Activated naive CD4-positive, alpha-beta T cell treated with anti-CD3 and anti-CD28 coated beads for 36 hours (primary cell): ENCODE measurements at regions of chr12 and their contacts with region 1.

Region 1: DNA sequence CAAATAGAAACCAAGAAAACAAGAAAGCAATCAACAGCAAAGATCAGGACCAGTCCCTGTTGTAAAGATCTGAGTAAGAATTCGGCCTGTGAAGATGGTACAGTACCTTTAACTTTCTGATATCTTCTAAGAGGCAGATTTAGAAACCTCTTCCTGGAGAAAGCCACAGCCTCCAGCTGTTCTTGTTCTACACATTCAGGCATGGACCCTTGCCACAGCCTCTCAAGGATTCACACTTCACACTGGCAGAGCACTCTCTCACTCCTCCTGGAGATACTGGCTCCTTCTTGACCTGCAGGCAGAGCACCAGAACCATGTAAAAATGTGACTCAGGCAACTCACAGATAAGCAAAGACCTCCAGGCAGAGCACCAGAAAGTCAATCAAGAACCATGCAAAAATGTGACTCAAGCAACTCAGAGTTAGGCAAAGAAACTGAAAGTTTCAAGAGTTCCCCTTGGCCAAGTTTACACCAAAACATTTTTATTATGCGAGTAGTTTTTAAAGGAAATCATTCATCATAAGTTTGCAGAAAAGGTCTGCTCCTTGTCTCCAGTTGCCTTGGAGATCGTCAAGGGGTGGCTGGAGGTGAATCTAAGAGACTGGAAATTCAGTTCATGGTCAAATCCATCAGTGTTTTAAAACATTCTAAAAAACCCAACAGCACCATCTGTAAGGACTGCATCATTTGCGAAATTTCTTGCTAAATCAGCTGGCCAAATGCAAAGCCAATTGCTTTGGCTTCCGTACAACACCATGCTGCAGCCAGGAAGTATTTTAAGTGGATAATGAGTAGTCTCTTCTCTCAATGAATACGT is 119.3 kb upstream of the MDM1 start:
- DNase-seq: peak; percentile 71
- H3K4me3 Mint-ChIP-seq: peak overlapping the region; percentile 45
- H3K27ac Mint-ChIP-seq: peak overlapping the region; percentile 96
- H3K4me1 Mint-ChIP-seq: peaks cover 91% of the 10 kb centered on the region
- H3K27me3 Mint-ChIP-seq: no peaks in the 10 kb centered on the region

Region 2: GRCh38 chr12:68290126-68290525 is 161.3 kb before region 1 on chr12:
- CTCF ChIA-PET with region 1: no interaction called
- intact Hi-C with region 1: loop called (anchors 1 kb)
- DNase-seq: peak; percentile 65
- H3K4me3 Mint-ChIP-seq: no peak overlapping the region
- H3K27ac Mint-ChIP-seq: no peak overlapping the region
- H3K4me1 Mint-ChIP-seq: peaks cover 41% of the 10 kb centered on the region
- H3K27me3 Mint-ChIP-seq: peaks cover 12% of the 10 kb centered on the region

Region 3: GRCh38 chr12:68381476-68382219 is 69.8 kb before region 1 on chr12:
- CTCF ChIA-PET with region 1: no interaction called
- intact Hi-C with region 1: no loop called
- DNase-seq: no peak
- H3K4me3 Mint-ChIP-seq: no peak overlapping the region
- H3K27ac Mint-ChIP-seq: no peak overlapping the region
- H3K4me1 Mint-ChIP-seq: peaks cover 15% of the 10 kb centered on the region
- H3K27me3 Mint-ChIP-seq: peaks cover 3% of the 10 kb centered on the region

Region 4: DNA sequence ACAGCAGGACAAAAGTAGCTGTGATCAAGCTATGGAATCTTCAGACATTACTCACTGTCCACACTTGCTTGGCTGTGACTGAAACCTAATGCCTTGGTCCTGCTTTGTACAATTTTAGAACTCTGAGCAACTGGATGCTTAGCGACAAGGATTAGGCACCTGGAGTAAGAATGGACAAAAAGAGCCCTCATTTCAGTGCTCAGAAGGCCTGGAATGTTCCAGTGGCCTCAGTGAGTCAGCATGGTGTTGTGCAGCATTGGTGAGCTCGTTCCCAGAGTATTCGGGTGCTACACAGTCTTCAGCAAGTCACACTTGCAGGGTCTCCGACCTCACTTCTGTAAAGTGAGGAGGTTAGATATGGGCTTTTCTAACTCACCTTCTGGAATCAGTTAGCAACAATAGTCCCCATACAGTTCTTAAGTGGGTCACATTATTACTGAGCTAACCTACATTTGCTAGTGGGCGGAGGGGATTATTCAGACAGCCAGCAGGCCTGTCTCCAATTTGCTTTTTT is 11.3 kb before region 1 on chr12:
- CTCF ChIA-PET with region 1: no interaction called
- intact Hi-C with region 1: no loop called
- DNase-seq: no peak
- H3K4me3 Mint-ChIP-seq: no peak overlapping the region
- H3K27ac Mint-ChIP-seq: no peak overlapping the region
- H3K4me1 Mint-ChIP-seq: peaks cover 17% of the 10 kb centered on the region
- H3K27me3 Mint-ChIP-seq: no peaks in the 10 kb centered on the region

Region 5: GRCh38 chr12:68482660-68483059 is 31.2 kb after region 1 on chr12:
- CTCF ChIA-PET with region 1: no interaction called
- intact Hi-C with region 1: loop called (anchors 1 kb)
- DNase-seq: peak; percentile 28
- H3K4me3 Mint-ChIP-seq: no peak overlapping the region
- H3K27ac Mint-ChIP-seq: peak overlapping the region; percentile 42
- H3K4me1 Mint-ChIP-seq: peaks cover 37% of the 10 kb centered on the region
- H3K27me3 Mint-ChIP-seq: no peaks in the 10 kb centered on the region

Region 6: GRCh38 chr12:68559984-68560850 is 108.7 kb after region 1 on chr12:
- CTCF ChIA-PET with region 1: no interaction called
- intact Hi-C with region 1: no loop called
- DNase-seq: peak; percentile 17
- H3K4me3 Mint-ChIP-seq: no peak overlapping the region
- H3K27ac Mint-ChIP-seq: no peak overlapping the region
- H3K4me1 Mint-ChIP-seq: peaks cover 43% of the 10 kb centered on the region
- H3K27me3 Mint-ChIP-seq: no peaks in the 10 kb centered on the region

Region 7: GRCh38 chr12:68587448-68587873 is 136.0 kb after region 1 on chr12:
- CTCF ChIA-PET with region 1: interaction called, 4 read pairs
- intact Hi-C with region 1: loop called (anchors 1 kb)
- DNase-seq: peak; percentile 81
- H3K4me3 Mint-ChIP-seq: no peak overlapping the region
- H3K27ac Mint-ChIP-seq: peak overlapping the region; percentile 27
- H3K4me1 Mint-ChIP-seq: peaks cover 55% of the 10 kb centered on the region
- H3K27me3 Mint-ChIP-seq: no peaks in the 10 kb centered on the region

Region 8: DNA sequence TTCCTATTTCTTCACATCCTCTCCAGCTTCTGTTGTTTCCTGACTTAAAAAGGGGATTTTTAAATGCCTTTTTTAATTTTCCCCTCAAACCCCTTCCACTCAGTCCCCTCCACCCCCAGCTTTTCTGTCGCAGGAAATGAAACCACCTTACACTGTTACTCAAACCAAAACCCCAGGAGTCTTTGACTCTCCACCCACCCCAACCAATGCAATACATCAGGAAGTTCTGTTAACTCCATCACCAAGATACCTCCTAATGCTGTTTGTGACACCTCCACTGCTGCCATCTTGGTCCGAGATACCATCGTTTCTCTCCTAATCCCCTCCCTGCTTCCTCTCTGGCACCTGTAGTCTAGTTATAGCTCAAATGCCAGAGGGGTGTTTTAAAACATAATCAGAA is 506.9 kb after region 1 on chr12:
- CTCF ChIA-PET with region 1: no interaction called
- intact Hi-C with region 1: loop called (anchors 5 kb)
- DNase-seq: peak; percentile 80
- H3K4me3 Mint-ChIP-seq: peak overlapping the region; percentile 34
- H3K27ac Mint-ChIP-seq: peak overlapping the region; percentile 98
- H3K4me1 Mint-ChIP-seq: peaks cover 54% of the 10 kb centered on the region
- H3K27me3 Mint-ChIP-seq: no peaks in the 10 kb centered on the region

Region 9: DNA sequence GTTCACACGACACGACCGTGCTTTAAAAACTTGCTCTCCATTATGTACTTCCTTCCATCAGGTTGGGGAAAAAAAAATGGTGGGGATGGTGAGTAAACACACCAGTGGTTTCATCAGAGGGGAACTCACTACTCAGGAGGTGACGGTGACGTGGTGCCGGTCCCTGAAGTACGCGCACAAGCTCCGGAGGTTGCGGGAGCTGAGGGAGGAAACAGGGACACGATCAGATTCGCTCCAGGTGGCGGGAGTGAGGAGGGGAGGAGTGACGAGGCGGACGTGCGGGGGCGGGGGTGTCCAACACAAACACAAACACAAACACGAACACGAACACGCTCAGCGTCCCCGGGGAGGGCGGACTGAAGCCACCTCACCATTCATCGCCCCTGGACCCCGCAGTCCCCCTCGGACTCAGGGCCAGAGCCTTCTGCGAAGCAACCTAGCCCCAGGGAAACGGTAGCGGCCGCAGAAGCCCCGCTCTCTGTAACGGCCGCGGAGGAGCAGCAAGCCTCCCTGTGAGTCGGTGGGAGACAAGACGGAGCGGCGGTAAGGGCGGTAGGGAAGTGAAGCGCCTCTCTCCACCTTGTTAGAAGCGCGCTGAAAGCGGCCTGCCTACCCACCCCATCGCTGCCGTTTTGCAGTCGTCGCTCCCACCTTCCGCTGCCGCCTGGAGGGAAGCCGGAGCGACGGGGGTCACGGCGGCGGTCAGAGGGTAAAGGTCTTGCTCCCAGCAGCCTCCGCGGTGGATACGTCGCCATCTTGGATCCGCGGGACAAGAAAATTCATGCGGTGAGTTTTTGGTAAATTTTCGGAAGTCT is 1791.4 kb after region 1 on chr12 and contains the start of gene CNOT2:
- CTCF ChIA-PET with region 1: no interaction called
- intact Hi-C with region 1: no loop called
- DNase-seq: peak; percentile 94
- H3K4me3 Mint-ChIP-seq: peak within 1 kb of the TSS; percentile 99
- H3K27ac Mint-ChIP-seq: peak within 1 kb of the TSS; percentile 100
- H3K4me1 Mint-ChIP-seq: peaks cover 48% of the 10 kb centered on the region
- H3K27me3 Mint-ChIP-seq: no peaks in the 10 kb centered on the region
- total RNA-seq, gene CNOT2: 66.0 to 66.2 TPM